Mammary epithelial cell (primary cell): ENCODE measurements at regions of chr3 and their contacts with region 1.

Region 1: GRCh38 chr3:168952551-168952950 is 711.0 kb downstream of the MECOM start:
- DNase-seq: peak; percentile 37
- H3K4me3 ChIP-seq: no peak overlapping the region
- H3K27ac ChIP-seq: peak overlapping the region; percentile 60
- H3K4me1 ChIP-seq: peaks cover 25% of the 10 kb centered on the region
- H3K27me3 ChIP-seq: no peaks in the 10 kb centered on the region
- CTCF ChIP-seq: peak; percentile 17 to 32

Region 2: GRCh38 chr3:168612671-168613070 is 339.9 kb before region 1 on chr3:
- CTCF ChIA-PET with region 1: no interaction called
- dilution Hi-C with region 1: no loop called
- in situ Hi-C with region 1: no loop called
- intact Hi-C with region 1: no loop called
- DNase-seq: no peak
- H3K4me3 ChIP-seq: no peak overlapping the region
- H3K27ac ChIP-seq: no peak overlapping the region
- H3K4me1 ChIP-seq: no peaks in the 10 kb centered on the region
- H3K27me3 ChIP-seq: no peaks in the 10 kb centered on the region
- CTCF ChIP-seq: no peak

Region 3: GRCh38 chr3:168996622-168997021 is 44.1 kb after region 1 on chr3:
- CTCF ChIA-PET with region 1: no interaction called
- dilution Hi-C with region 1: no loop called
- in situ Hi-C with region 1: no loop called
- intact Hi-C with region 1: no loop called
- DNase-seq: no peak
- H3K4me3 ChIP-seq: no peak overlapping the region
- H3K27ac ChIP-seq: no peak overlapping the region
- H3K4me1 ChIP-seq: no peaks in the 10 kb centered on the region
- H3K27me3 ChIP-seq: no peaks in the 10 kb centered on the region
- CTCF ChIP-seq: no peak

Region 4: DNA sequence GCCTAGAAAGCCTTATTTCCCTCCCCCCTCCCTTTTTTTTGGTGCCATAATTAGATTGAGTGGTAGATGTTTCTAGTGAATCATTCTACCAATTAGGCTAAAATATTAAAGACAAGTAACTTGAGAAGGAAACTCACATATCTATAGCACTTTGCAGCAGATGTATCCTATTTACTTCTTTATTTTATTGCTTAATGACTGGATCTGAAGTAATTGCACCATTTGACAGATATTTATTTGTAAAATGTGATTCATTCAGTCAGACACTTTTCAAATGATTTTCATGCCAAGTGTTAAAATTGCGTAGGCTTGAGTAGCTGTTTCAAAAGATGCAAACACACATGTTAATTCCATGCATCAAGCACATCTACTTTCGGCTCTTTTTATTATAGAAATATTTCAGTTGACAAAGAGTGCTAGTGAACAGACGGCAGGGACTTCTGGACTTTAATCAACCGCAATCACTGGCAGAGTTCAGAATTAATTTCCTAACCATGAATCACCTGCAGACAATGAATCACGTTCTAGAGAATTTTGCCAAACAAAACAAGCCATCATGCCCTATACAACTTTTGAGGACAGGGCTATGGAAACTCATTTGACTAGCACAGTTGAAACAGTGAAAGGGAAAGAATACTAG is 74.1 kb after region 1 on chr3:
- CTCF ChIA-PET with region 1: no interaction called
- dilution Hi-C with region 1: no loop called
- in situ Hi-C with region 1: no loop called
- intact Hi-C with region 1: loop called (anchors 10 kb)
- DNase-seq: peak; percentile 95
- H3K4me3 ChIP-seq: peak overlapping the region in 1 of 3 experiments; percentile 20
- H3K27ac ChIP-seq: peak overlapping the region; percentile 30
- H3K4me1 ChIP-seq: peaks cover 32% of the 10 kb centered on the region
- H3K27me3 ChIP-seq: no peaks in the 10 kb centered on the region
- CTCF ChIP-seq: no peak

Region 5: GRCh38 chr3:169041677-169042171 is 89.2 kb after region 1 on chr3:
- CTCF ChIA-PET with region 1: no interaction called
- dilution Hi-C with region 1: no loop called
- in situ Hi-C with region 1: no loop called
- intact Hi-C with region 1: loop called (anchors 2 kb)
- DNase-seq: peak; percentile 43
- H3K4me3 ChIP-seq: no peak overlapping the region
- H3K27ac ChIP-seq: peak overlapping the region; percentile 37
- H3K4me1 ChIP-seq: peaks cover 33% of the 10 kb centered on the region
- H3K27me3 ChIP-seq: no peaks in the 10 kb centered on the region
- CTCF ChIP-seq: peak; percentile 63 to 68

Region 6: GRCh38 chr3:169133178-169134161 is 180.9 kb after region 1 on chr3:
- CTCF ChIA-PET with region 1: no interaction called
- dilution Hi-C with region 1: no loop called
- in situ Hi-C with region 1: no loop called
- intact Hi-C with region 1: loop called (anchors 5 kb)
- DNase-seq: no peak
- H3K4me3 ChIP-seq: no peak overlapping the region
- H3K27ac ChIP-seq: no peak overlapping the region
- H3K4me1 ChIP-seq: peaks cover 5% of the 10 kb centered on the region
- H3K27me3 ChIP-seq: no peaks in the 10 kb centered on the region
- CTCF ChIP-seq: peak; percentile 41 to 55

Region 7: GRCh38 chr3:169348929-169349613 is 396.5 kb after region 1 on chr3:
- CTCF ChIA-PET with region 1: no interaction called
- dilution Hi-C with region 1: no loop called
- in situ Hi-C with region 1: no loop called
- intact Hi-C with region 1: loop called (anchors 1 kb)
- DNase-seq: peak; percentile 92
- H3K4me3 ChIP-seq: no peak overlapping the region
- H3K27ac ChIP-seq: peak overlapping the region; percentile 85
- H3K4me1 ChIP-seq: peaks cover 36% of the 10 kb centered on the region
- H3K27me3 ChIP-seq: no peaks in the 10 kb centered on the region
- CTCF ChIP-seq: no peak

Region 8: DNA sequence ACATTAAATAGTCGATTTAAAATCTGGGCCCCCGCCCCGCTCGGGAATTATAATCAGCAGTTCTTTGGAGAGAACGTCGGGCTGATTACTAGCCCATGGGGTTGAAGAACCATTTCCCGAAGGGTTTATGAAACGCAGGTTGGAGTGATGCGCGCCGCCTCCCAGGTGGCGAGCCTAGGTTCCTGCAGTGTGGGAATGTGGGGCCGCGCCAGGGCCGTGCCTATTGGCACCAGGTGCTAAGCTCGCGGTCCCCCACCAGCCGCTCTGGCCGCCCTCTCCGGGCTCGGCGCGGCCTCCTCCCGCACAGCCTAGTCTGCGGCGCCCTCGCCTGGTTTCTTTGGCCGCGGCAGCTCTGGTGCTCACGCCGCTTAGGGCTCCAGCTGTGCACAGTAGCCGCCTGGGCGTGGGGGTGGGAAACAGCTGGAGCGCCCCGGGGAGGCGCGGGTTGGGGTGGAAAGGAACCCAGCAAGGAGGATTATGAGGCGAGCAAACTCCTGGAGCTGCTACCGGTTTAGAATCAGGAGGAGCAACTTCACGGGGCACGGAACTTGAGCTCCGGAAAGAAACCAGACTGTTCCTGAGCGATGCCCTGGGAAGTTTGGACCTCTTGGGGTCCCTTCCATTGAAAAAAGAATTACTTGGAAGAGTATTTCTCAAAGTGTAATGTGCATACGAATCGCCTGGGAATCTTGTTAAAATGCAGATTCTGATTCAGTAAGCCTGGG is 716.6 kb after region 1 on chr3:
- CTCF ChIA-PET with region 1: no interaction called
- dilution Hi-C with region 1: no loop called
- in situ Hi-C with region 1: no loop called
- intact Hi-C with region 1: loop called (anchors 2 kb)
- DNase-seq: peak; percentile 67
- H3K4me3 ChIP-seq: peak overlapping the region; percentile 41 to 46 (median 43)
- H3K27ac ChIP-seq: no peak overlapping the region
- H3K4me1 ChIP-seq: peaks cover 12% of the 10 kb centered on the region
- H3K27me3 ChIP-seq: peaks cover 50% of the 10 kb centered on the region
- CTCF ChIP-seq: peak; percentile 37 to 88